MCF 10A (cell line): ENCODE measurements at regions of chr6 and their contacts with region 1.

Region 1: DNA sequence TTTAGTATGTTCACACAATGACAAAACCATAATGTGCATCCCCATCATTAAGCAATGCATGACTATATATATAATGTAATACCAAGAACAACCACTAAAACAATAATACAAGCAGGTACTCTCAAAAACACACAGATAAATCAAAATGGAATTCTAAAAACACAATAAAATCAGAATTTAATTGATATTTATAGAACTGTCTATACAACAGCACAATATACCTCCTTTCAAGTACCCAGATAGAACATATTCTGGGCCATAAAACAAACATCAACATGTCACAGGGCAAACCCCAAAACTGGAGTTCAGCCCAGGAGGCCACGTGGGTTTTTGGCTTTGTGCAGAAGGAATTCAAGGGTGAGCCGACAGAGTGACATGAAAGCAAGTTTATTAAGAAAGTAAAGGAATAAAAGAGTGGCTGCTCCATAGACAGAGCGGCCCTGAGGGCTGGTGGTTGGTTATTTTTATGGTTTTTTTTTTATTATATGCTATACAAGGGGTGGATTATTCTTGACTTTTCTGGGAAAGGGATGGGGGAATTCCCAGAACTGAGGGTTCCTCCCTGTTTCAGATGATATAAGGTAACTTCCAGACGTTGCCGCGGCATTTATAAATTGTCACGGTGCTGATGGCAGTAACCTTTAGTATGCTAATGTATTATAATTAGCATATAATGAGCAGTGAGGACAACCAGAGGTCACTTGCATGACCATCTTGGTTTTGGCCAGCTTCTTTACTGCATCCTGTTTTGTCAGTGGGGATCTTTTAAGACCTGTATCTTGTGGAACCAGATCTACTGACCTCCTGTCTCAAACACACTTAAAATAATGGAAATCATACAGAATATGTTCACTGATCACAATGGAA is 5.6 kb downstream of the RAB23 start:
- DNase-seq: peak; percentile 63
- H3K4me3 Mint-ChIP-seq: peak overlapping the region; percentile 67
- H3K27ac Mint-ChIP-seq: peak overlapping the region; percentile 66
- H3K4me1 Mint-ChIP-seq: peaks cover 36% of the 10 kb centered on the region
- H3K27me3 Mint-ChIP-seq: no peaks in the 10 kb centered on the region
- CTCF ChIP-seq: peak; percentile 30

Region 2: DNA sequence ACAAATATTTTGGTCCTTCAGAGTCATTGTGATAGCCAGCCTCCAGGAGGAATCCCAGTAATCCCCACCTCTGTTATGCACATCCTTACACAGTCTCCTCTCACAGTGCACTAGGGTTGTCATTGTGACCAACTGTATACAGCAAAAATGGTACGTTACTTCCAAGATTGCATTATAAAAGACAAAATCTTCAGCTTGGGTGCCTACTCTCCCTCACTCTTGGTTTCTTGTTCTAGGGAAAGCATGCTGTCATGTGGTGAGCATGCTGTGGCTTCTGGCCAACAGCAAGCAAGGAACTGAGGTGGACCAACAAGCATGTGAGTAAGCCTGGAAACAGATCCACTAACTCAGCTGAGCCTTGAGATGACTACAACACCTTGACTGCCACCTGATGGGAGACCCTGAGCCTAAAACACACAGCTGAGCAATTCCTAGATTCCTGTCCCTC is 443.7 kb before region 1 on chr6:
- CTCF ChIA-PET with region 1: no interaction called
- POLR2A ChIA-PET with region 1: no interaction called
- intact Hi-C with region 1: no loop called
- DNase-seq: peak; percentile 79
- H3K4me3 Mint-ChIP-seq: no peak overlapping the region
- H3K27ac Mint-ChIP-seq: peak overlapping the region; percentile 32
- H3K4me1 Mint-ChIP-seq: peaks cover 8% of the 10 kb centered on the region
- H3K27me3 Mint-ChIP-seq: no peaks in the 10 kb centered on the region
- CTCF ChIP-seq: no peak

Region 3: GRCh38 chr6:57075092-57075491 is 141.4 kb before region 1 on chr6:
- CTCF ChIA-PET with region 1: no interaction called
- POLR2A ChIA-PET with region 1: no interaction called
- intact Hi-C with region 1: no loop called
- DNase-seq: no peak
- H3K4me3 Mint-ChIP-seq: no peak overlapping the region
- H3K27ac Mint-ChIP-seq: no peak overlapping the region
- H3K4me1 Mint-ChIP-seq: no peaks in the 10 kb centered on the region
- H3K27me3 Mint-ChIP-seq: no peaks in the 10 kb centered on the region
- CTCF ChIP-seq: peak; percentile 12

Region 4: GRCh38 chr6:57303931-57304681 is 87.6 kb after region 1 on chr6:
- CTCF ChIA-PET with region 1: no interaction called
- POLR2A ChIA-PET with region 1: interaction called, 5 read pairs
- intact Hi-C with region 1: loop called (anchors 5 kb)
- DNase-seq: no peak
- H3K4me3 Mint-ChIP-seq: no peak overlapping the region
- H3K27ac Mint-ChIP-seq: no peak overlapping the region
- H3K4me1 Mint-ChIP-seq: peaks cover 6% of the 10 kb centered on the region
- H3K27me3 Mint-ChIP-seq: no peaks in the 10 kb centered on the region
- CTCF ChIP-seq: no peak